GM12878 (cell line): ENCODE measurements at regions of chr6 and their contacts with region 1.

Region 1: DNA sequence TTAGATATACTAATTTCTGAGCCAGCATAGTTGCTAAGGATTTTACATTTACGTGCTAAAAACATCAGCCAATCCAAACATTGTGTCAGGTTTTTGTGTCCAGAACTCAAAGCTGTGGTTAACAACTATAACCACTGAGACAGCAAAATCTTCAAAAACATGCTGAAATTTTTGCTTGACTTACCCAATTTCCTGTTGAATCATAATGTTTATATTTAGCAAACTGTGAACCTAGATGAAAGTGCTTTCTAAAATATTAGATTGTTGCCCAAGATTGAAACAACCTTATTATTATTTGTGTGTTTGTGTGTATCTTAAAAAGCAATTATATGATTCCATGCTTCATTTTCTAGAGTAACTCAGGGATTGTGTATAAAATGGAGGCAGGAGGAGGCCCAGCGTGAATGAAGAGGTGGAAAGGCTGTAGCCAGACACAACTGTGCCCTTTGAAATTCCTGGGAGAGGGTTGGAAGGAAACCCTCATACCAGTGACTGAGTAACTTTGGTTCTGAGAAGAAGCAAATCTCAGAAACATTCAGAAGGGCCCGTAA is 48.0 kb downstream of the ARMC2 start:
- DNase-seq: no peak
- ATAC-seq: no peak
- H3K4me3 ChIP-seq: no peak overlapping the region
- H3K27ac ChIP-seq: no peak overlapping the region
- H3K4me1 ChIP-seq: no peaks in the 10 kb centered on the region
- H3K27me3 ChIP-seq: peaks cover 3 to 4% of the 10 kb centered on the region in 2 experiments; a peak in 2 of 4 replicates
- CTCF ChIP-seq: no peak
- EP300 ChIP-seq: peak in 1 of 2 experiments; percentile 34; a peak in 1 of 4 replicates
- POLR2A ChIP-seq: no peak
- RAD21 ChIP-seq: no peak

Region 2: DNA sequence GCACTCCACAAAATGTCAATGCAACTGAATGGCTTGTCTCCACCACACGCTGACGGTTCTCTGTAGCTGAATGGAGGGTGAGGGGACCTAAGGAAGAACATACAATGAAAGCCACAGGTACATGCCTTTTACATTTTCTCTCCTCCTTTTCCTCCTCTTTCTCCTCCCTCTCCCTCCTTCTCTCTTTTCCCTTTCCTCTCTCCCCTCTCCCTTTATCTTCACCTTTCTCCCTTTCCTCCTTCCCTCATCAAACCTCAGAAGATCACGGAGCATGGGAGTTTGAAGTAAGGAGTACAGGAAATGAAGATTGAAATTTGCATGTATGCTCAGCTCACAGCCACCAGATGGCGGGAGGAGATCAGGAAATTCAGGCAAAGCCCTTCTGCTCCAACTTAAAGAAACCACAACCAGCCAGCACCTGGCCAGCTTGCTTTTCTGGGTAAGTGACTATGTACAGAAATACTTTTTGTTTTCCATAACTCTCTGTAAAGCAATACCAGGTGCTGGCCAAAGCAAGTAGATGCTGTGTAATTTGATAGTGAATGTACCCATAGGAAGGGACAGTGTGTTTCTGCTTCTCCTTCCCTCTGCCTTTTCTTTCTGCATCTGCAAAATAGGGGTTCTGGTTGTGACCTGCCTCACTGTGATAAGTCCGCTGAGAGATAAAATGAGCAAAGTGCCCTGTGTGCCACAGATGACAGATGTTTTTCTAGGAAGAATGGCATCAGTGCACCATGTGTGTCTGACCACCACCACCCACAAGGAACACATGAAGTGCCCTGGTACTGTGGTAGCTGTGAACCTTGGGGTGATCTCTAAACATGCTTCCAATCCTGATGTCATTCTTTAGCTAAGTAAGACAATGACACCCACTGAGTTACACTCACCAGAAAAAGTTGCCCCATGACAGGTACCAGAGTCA is 354.1 kb before region 1 on chr6:
- CTCF ChIA-PET with region 1: interaction called, 50 read pairs
- POLR2A ChIA-PET with region 1: no interaction called
- RAD21 ChIA-PET with region 1: interaction called, 29 read pairs
- SMC1A ChIA-PET with region 1: interaction called, 24 read pairs
- in situ Hi-C with region 1: no loop called
- intact Hi-C with region 1: loop called (anchors 1 kb)
- DNase-seq: no peak
- ATAC-seq: peak; percentile 85
- H3K4me3 ChIP-seq: no peak overlapping the region
- H3K27ac ChIP-seq: no peak overlapping the region
- H3K4me1 ChIP-seq: no peaks in the 10 kb centered on the region
- H3K27me3 ChIP-seq: peaks cover 0 to 1% of the 10 kb centered on the region in 2 experiments; a peak in 2 of 4 replicates
- CTCF ChIP-seq: peak; percentile 76 to 91 (median 80)
- EP300 ChIP-seq: no peak
- POLR2A ChIP-seq: no peak
- RAD21 ChIP-seq: peak; percentile 95